ENCODE measurements at regions of chr7 and their contacts with region 1.

Region 1: GRCh38 chr7:25894902-25895791 is 256.9 kb upstream of the NFE2L3 start:
- DNase-seq: peak; percentile 44 to 60 (median 51)
- H3K4me3 ChIP-seq: no peak overlapping the region
- H3K4me3 Mint-ChIP-seq: peak overlapping the region; percentile 50 to 94 (median 56)
- H3K27ac ChIP-seq: no peak overlapping the region
- H3K27ac Mint-ChIP-seq: peak overlapping the region in 4 of 7 donors; percentile 9 to 77 (median 43)
- H3K4me1 ChIP-seq: peaks cover 26% of the 10 kb centered on the region
- H3K4me1 Mint-ChIP-seq: peaks cover 16 to 24% (median 21%) of the 10 kb centered on the region in 4 donors
- H3K27me3 ChIP-seq: no peaks in the 10 kb centered on the region
- H3K27me3 Mint-ChIP-seq: peaks cover 0 to 3% of the 10 kb centered on the region in 2 donors

Region 2: DNA sequence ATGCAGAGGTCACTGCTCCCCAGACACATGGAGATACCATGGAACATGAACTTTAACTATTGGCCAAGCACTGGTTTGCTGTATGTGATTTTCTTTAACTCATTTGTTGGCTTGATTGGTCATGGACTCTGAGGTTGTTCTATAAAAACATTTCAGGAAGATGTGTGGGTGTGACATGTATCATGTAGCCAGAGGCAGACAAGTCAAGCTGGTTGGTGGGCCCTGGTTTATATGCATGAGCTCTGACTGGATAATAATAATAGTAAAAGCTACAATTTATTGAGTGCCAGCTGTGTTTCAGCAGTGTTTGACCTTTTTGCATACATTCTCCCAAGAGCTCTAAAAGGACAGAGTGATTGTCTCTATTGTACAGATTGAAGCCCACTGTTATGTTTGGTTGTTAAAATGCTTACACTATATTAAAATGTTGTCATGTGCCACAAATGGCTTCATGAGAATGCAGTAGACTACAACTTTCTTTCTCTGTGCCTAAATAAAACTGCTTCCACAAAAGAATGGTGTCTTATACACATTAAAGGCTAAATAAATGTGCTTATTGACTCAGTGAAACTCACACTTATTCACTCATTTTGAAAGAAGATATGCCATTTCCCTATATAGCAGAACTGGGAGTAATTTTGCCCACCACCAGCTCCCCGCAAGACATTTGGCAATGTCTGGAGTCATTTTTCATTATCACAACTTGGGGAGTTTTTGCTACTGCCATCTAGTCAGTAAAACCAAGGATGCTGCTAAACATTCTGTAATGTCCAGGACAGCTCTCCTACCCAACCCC is 13.2 kb after region 1 on chr7:
- CTCF ChIA-PET with region 1: interaction called, 82 read pairs
- POLR2A ChIA-PET with region 1: interaction called, 3 read pairs
- intact Hi-C with region 1: no loop called
- DNase-seq: no peak
- H3K4me3 ChIP-seq: no peak overlapping the region
- H3K4me3 Mint-ChIP-seq: no peak overlapping the region
- H3K27ac ChIP-seq: no peak overlapping the region
- H3K27ac Mint-ChIP-seq: no peak overlapping the region
- H3K4me1 ChIP-seq: no peaks in the 10 kb centered on the region
- H3K4me1 Mint-ChIP-seq: no peaks in the 10 kb centered on the region
- H3K27me3 ChIP-seq: no peaks in the 10 kb centered on the region
- H3K27me3 Mint-ChIP-seq: peaks cover 6 to 8% of the 10 kb centered on the region in 2 donors

Region 3: DNA sequence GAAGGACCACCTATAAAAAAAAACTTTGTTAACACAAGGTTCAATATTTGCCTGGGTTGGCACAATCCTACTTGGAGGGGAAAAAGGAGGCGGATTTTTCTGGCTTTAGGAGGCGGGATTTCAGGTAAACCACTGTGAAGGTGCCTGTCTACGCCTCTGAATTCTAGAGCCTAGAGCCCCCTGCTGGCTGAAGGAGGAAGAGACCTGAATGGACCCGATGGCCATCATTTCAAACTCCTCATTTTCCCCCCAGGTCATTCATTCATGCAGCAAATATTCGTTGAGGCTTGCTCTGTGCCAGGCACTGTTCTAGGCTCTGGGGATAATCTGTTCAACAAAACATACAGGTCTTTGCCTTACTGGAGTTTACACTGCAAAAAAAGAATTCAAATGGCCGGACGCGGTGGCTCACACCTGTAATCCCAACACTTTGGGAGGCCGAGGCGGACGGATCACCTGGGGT is 166.6 kb after region 1 on chr7:
- CTCF ChIA-PET with region 1: interaction called, 161 read pairs
- POLR2A ChIA-PET with region 1: interaction called, 3 read pairs
- intact Hi-C with region 1: loop called (anchors 1 kb)
- DNase-seq: peak; percentile 50 to 71 (median 61)
- H3K4me3 ChIP-seq: no peak overlapping the region
- H3K4me3 Mint-ChIP-seq: peak overlapping the region in 1 of 8 donors; percentile 20
- H3K27ac ChIP-seq: no peak overlapping the region
- H3K27ac Mint-ChIP-seq: no peak overlapping the region
- H3K4me1 ChIP-seq: no peaks in the 10 kb centered on the region
- H3K4me1 Mint-ChIP-seq: peaks cover 2 to 5% (median 3%) of the 10 kb centered on the region in 4 donors
- H3K27me3 ChIP-seq: no peaks in the 10 kb centered on the region
- H3K27me3 Mint-ChIP-seq: peaks cover 23 to 24% of the 10 kb centered on the region in 2 donors

Region 4: DNA sequence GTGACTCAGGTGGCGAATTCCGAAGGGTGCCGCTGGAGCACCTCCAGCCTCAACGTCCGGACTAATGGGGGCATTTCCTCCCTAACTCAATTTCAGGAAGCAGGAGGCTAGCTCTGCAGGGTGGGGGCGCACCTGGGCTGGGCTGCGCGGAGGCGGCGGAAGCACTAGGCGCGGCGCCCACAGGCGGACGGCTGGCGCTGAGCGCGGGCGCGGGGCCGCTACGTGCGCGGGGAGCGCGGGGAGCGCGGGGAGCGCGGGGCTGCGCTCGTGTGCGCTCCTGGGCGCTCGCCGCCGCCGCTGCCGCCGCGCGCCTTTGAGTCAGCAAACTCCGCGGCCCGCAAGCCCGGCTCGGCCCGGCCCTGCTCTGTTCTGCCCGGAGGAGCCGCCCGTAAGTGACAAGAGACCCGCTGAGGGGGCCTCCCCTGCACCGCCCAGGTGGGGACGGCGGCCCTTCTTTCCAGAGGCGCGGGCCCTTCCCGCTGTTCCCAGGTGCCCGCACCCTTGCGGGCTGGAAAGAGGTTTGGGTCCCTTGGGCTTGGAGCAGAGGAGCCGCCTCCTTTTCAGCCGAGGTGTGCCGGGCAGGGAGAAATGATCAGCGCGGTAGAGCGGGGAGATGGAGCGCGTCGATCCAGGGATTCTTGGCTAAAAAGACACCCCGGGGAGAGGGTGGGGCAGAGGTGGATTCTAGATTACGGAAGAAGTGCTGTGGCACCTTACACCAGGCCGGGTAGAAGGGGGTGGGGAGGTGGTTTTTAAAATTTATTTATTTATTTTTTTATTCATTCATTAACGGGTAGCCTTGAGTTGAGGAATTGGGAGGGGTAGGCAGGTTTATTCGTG is 396.8 kb after region 1 on chr7 and contains the start of gene SNX10:
- CTCF ChIA-PET with region 1: interaction called, 6 read pairs
- POLR2A ChIA-PET with region 1: no interaction called
- intact Hi-C with region 1: loop called (anchors 5 kb)
- DNase-seq: peak; percentile 61 to 74 (median 69)
- H3K4me3 ChIP-seq: peak within 1 kb of the TSS; percentile 43 to 61
- H3K4me3 Mint-ChIP-seq: peak within 1 kb of the TSS; percentile 90 to 97 (median 92)
- H3K27ac ChIP-seq: peak within 1 kb of the TSS; percentile 39
- H3K27ac Mint-ChIP-seq: peak within 1 kb of the TSS; percentile 79 to 93 (median 88)
- H3K4me1 ChIP-seq: peaks cover 32% of the 10 kb centered on the region
- H3K4me1 Mint-ChIP-seq: peaks cover 24 to 42% (median 34%) of the 10 kb centered on the region in 4 donors
- H3K27me3 ChIP-seq: no peaks in the 10 kb centered on the region
- H3K27me3 Mint-ChIP-seq: no peaks in the 10 kb centered on the region
- total RNA-seq, gene SNX10: 8.4 to 8.7 TPM

Region 5: DNA sequence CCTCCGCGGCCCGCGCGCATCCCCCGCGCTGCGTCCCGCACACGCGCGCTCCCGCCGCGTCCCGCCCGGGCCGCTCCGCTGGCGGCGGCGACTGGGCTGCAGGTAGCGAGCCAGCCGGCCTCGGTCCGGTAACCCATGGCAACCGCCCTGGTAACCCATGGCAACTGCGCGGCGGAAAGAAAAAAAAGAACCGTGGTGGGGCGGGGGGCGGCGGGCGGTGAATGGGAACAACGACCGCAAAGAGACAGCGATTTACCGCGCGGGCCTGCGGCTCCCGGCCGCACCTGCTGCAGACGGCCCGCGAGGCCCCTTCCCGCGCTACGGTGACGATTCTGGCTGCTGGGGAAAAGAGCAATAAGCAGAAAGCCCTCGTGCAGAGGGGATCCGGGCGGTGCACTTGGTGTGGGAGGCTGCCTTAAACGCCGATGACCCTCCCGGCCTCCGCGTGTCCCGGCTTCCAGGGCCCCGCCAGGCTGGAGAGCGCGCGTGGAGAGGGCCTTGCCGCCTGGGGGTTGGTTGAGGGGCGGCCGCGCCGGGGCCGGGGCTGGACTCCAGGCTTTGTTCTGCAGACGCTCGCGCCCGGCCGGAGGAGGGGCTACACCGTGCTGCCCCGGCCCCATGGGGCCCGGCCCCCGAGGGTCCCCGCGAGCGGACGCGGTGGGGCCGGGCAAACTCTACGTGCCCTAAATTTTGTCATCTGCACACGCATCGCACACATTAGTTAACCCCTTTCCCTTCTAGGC is 481.2 kb after region 1 on chr7:
- CTCF ChIA-PET with region 1: interaction called, 10 read pairs
- POLR2A ChIA-PET with region 1: no interaction called
- intact Hi-C with region 1: no loop called
- DNase-seq: peak; percentile 22 to 43 (median 24)
- H3K4me3 ChIP-seq: peak overlapping the region; percentile 26 to 56
- H3K4me3 Mint-ChIP-seq: peak overlapping the region; percentile 83 to 95 (median 88)
- H3K27ac ChIP-seq: no peak overlapping the region
- H3K27ac Mint-ChIP-seq: peak overlapping the region in 2 of 7 donors; percentile 24 to 75
- H3K4me1 ChIP-seq: peaks cover 8% of the 10 kb centered on the region
- H3K4me1 Mint-ChIP-seq: peaks cover 0 to 7% (median 5%) of the 10 kb centered on the region in 4 donors
- H3K27me3 ChIP-seq: peaks cover 11% of the 10 kb centered on the region
- H3K27me3 Mint-ChIP-seq: peaks cover 13 to 23% of the 10 kb centered on the region in 2 donors

Region 6: GRCh38 chr7:27179503-27180430 is 1284.6 kb after region 1 on chr7:
- CTCF ChIA-PET with region 1: interaction called, 13 read pairs
- POLR2A ChIA-PET with region 1: no interaction called
- intact Hi-C with region 1: no loop called
- DNase-seq: peak in 4 of 5 donors; percentile 49 to 63 (median 56)
- H3K4me3 ChIP-seq: no peak overlapping the region
- H3K4me3 Mint-ChIP-seq: peak overlapping the region; percentile 9 to 79 (median 68)
- H3K27ac ChIP-seq: no peak overlapping the region
- H3K27ac Mint-ChIP-seq: peak overlapping the region in 1 of 7 donors; percentile 68
- H3K4me1 ChIP-seq: peaks cover 21% of the 10 kb centered on the region
- H3K4me1 Mint-ChIP-seq: peaks cover 5 to 26% (median 12%) of the 10 kb centered on the region in 4 donors
- H3K27me3 ChIP-seq: peaks cover 45% of the 10 kb centered on the region
- H3K27me3 Mint-ChIP-seq: peaks cover 57 to 71% of the 10 kb centered on the region in 2 donors

Measured in CD4-positive, alpha-beta memory T cell (primary cell).